ENCODE measurements at regions of chr5 and their contacts with region 1.

Region 1: GRCh38 chr5:87412630-87413342 is at the start of gene CCNH:
- DNase-seq: peak; percentile 90
- ATAC-seq: peak; percentile 99
- H3K4me3 Mint-ChIP-seq: peak within 1 kb of the TSS; percentile 91
- H3K27ac Mint-ChIP-seq: peak within 1 kb of the TSS; percentile 93
- H3K4me1 Mint-ChIP-seq: peaks cover 36% of the 10 kb centered on the region
- H3K27me3 Mint-ChIP-seq: no peaks in the 10 kb centered on the region
- CTCF ChIP-seq: no peak
- total RNA-seq, gene CCNH: 69.3 and 74.8 TPM in 2 replicates

Region 2: DNA sequence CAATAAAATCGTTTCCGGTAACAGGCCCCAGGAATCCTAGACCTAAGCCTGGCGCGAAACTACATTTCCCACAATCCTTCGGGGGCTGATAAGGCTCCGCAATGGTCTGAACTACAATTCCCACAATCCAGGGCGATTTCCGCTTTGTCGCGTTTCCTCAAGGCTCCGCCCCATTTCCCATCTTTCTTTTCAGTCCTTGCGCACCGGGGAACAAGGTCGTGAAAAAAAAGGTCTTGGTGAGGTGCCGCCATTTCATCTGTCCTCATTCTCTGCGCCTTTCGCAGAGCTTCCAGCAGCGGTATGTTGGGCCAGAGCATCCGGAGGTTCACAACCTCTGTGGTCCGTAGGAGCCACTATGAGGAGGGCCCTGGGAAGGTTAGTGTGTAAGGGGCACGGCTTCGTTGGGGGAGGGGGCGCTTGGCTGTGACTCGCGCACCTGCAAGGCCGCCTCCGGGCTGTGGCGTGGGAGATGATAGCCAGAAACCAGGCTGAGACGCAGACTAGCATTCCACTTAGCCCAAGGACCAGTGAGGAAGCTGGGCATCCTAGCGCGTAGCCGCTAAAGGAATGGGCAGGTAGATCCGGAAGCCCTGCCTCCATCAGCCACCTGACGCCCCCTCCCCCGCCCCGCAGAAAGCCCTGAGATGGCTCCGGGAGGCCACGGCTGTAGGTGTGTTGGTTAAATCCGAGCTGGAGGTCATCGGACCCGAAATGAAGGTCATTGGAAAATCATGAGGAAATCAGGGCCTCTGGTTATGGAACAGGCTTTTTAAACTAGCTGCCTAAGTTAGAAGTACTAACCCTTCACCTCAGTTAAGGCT is 794.8 kb before region 1 on chr5 and contains the start of gene COX7C:
- CTCF ChIA-PET with region 1: no interaction called
- POLR2A ChIA-PET with region 1: no interaction called
- intact Hi-C with region 1: loop called (anchors 1 kb)
- DNase-seq: peak; percentile 77
- ATAC-seq: peak; percentile 96
- H3K4me3 Mint-ChIP-seq: peak within 1 kb of the TSS; percentile 100
- H3K27ac Mint-ChIP-seq: peak within 1 kb of the TSS; percentile 99
- H3K4me1 Mint-ChIP-seq: peaks cover 28% of the 10 kb centered on the region
- H3K27me3 Mint-ChIP-seq: peaks cover 7% of the 10 kb centered on the region
- CTCF ChIP-seq: no peak
- total RNA-seq, gene COX7C: 486 and 584 TPM in 2 replicates

Region 3: DNA sequence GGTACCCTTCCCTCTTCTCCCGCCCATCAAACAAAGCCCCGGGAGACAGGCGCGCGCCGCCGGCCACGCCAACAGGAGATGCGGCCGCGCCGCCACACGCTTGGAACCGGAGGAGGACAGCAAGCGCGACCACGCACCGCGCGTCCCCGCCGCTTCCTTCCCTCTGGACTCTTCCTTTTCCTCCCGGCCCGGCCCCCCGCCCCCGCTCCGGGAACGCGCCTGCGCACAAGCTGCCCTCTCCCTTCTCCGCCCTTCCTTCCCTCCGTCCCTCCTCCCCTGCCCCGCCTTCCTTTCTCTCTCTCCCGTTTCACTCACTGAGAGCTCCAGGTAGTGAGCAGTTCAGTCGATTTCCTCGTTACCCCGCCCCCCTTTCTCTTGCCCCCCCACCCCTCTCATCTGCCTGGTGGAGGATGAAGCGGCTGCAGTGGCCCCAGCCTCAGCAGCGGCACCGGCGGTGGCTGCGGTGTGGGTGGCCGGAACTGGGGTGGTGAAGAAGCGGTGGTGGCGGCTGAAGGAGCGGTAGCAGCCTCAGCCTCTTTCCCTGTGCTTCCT is 145.1 kb before region 1 on chr5 and contains the start of gene RASA1:
- CTCF ChIA-PET with region 1: interaction called, 3 read pairs
- POLR2A ChIA-PET with region 1: interaction called, 5 read pairs
- intact Hi-C with region 1: loop called (anchors 1 kb)
- DNase-seq: peak; percentile 78
- ATAC-seq: peak; percentile 70
- H3K4me3 Mint-ChIP-seq: peak within 1 kb of the TSS; percentile 99
- H3K27ac Mint-ChIP-seq: peak within 1 kb of the TSS; percentile 96
- H3K4me1 Mint-ChIP-seq: peaks cover 26% of the 10 kb centered on the region
- H3K27me3 Mint-ChIP-seq: no peaks in the 10 kb centered on the region
- CTCF ChIP-seq: no peak
- total RNA-seq, gene RASA1: 25.6 and 28.8 TPM in 2 replicates

Region 4: DNA sequence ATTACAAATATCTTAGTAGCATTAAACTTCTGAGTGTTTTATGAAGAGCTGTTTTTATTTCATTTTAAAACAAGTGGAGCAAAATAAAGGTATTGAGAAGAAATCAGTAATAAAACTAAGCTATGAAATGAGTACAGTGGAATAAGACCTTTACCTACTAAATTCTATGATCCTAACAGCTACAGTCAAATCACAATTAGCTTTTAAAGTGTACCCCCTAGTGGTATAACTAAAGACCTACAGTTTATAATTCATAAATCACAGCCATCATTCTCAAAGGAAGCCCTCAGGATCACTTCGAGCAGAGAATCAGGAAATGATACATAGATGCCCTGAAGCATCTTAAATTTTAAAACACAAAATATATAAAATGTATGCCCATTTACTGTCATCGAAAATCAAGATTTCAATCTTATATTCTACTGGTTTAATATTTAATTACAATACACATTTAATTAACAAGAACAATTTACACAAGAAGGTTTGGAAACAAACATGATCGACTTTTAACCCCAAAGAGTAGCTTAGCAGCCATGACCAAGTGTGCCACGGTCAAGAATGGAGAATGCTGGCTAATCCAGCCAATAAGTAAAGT is 12.4 kb before region 1 on chr5:
- CTCF ChIA-PET with region 1: interaction called, 5 read pairs
- POLR2A ChIA-PET with region 1: interaction called, 5 read pairs
- intact Hi-C with region 1: loop called (anchors 1 kb)
- DNase-seq: no peak
- ATAC-seq: peak; percentile 94
- H3K4me3 Mint-ChIP-seq: no peak overlapping the region
- H3K27ac Mint-ChIP-seq: no peak overlapping the region
- H3K4me1 Mint-ChIP-seq: peaks cover 9% of the 10 kb centered on the region
- H3K27me3 Mint-ChIP-seq: no peaks in the 10 kb centered on the region
- CTCF ChIP-seq: peak; percentile 17

Region 5: GRCh38 chr5:87423755-87424154 is 11.0 kb after region 1 on chr5:
- CTCF ChIA-PET with region 1: no interaction called
- POLR2A ChIA-PET with region 1: no interaction called
- intact Hi-C with region 1: no loop called
- DNase-seq: no peak
- ATAC-seq: no peak
- H3K4me3 Mint-ChIP-seq: no peak overlapping the region
- H3K27ac Mint-ChIP-seq: no peak overlapping the region
- H3K4me1 Mint-ChIP-seq: no peaks in the 10 kb centered on the region
- H3K27me3 Mint-ChIP-seq: peaks cover 10% of the 10 kb centered on the region
- CTCF ChIP-seq: no peak

Region 6: GRCh38 chr5:87435144-87435694 is 22.4 kb after region 1 on chr5:
- CTCF ChIA-PET with region 1: no interaction called
- POLR2A ChIA-PET with region 1: no interaction called
- intact Hi-C with region 1: no loop called
- DNase-seq: no peak
- ATAC-seq: no peak
- H3K4me3 Mint-ChIP-seq: no peak overlapping the region
- H3K27ac Mint-ChIP-seq: no peak overlapping the region
- H3K4me1 Mint-ChIP-seq: no peaks in the 10 kb centered on the region
- H3K27me3 Mint-ChIP-seq: peaks cover 8% of the 10 kb centered on the region
- CTCF ChIP-seq: no peak

Region 7: GRCh38 chr5:88680253-88681132 is 1267.7 kb after region 1 on chr5:
- CTCF ChIA-PET with region 1: no interaction called
- POLR2A ChIA-PET with region 1: no interaction called
- intact Hi-C with region 1: loop called (anchors 10 kb)
- DNase-seq: peak; percentile 74
- ATAC-seq: peak; percentile 74
- H3K4me3 Mint-ChIP-seq: peak overlapping the region; percentile 24
- H3K27ac Mint-ChIP-seq: no peak overlapping the region
- H3K4me1 Mint-ChIP-seq: peaks cover 12% of the 10 kb centered on the region
- H3K27me3 Mint-ChIP-seq: peaks cover 61% of the 10 kb centered on the region
- CTCF ChIP-seq: no peak

Region 8: GRCh38 chr5:88979244-88979643 is 1566.5 kb after region 1 on chr5:
- CTCF ChIA-PET with region 1: no interaction called
- POLR2A ChIA-PET with region 1: no interaction called
- intact Hi-C with region 1: no loop called
- DNase-seq: no peak
- ATAC-seq: peak; percentile 75
- H3K4me3 Mint-ChIP-seq: peak overlapping the region; percentile 13
- H3K27ac Mint-ChIP-seq: peak overlapping the region; percentile 62
- H3K4me1 Mint-ChIP-seq: peaks cover 25% of the 10 kb centered on the region
- H3K27me3 Mint-ChIP-seq: no peaks in the 10 kb centered on the region
- CTCF ChIP-seq: no peak